AG04449 (cell line): ENCODE measurements at regions of chr10 and their contacts with region 1.

Region 1: GRCh38 chr10:77173615-77174461 is 463.8 kb downstream of the KCNMA1 start:
- DNase-seq: no peak
- H3K4me3 ChIP-seq: no peak overlapping the region
- CTCF ChIP-seq: peak; percentile 86

Region 2: DNA sequence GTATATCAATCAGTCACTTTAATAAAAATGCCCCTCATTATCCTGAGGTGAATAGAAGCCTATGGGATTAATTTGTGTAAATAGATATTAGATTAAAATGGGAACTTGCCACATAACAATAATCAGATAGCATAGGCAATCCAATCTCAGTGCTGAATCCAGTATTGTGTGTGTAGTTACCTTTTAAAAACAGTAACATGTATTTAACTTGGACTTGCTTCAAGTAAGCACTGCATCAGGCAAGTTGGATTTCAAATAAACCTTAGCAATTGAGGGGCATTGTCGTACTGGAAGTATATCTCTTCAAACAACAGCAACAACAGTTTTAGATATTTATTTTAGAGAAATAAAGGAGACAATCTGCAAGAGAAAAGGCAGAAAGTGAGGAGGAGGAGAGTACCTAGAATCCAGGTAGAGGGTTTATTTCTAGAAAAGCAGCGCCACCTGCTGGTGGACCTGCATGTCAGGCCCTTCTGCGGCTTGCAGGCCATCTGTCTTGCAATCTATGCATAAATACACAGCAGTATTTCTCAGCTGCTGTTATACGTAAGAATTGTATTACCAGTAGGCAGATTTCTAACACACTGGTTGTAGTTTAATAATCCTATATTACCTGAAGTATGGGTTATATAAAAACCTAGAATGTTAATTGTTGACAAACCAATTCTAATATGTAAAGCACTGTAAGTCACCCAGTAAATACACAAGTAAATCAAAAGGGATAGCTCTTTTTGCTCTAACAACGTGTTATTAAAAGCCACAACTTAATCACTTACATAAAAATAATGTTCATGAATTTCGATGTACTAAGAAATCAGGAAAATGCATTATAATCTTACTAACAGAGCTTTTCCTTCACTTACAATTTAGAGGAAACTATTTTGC is 189.0 kb before region 1 on chr10:
- CTCF ChIA-PET with region 1: no interaction called
- POLR2A ChIA-PET with region 1: no interaction called
- DNase-seq: peak; percentile 14
- H3K4me3 ChIP-seq: no peak overlapping the region
- CTCF ChIP-seq: peak; percentile 84

Region 3: GRCh38 chr10:77188521-77188920 is 14.7 kb after region 1 on chr10:
- CTCF ChIA-PET with region 1: interaction called, 11 read pairs
- POLR2A ChIA-PET with region 1: interaction called, 3 read pairs
- DNase-seq: no peak
- H3K4me3 ChIP-seq: no peak overlapping the region
- CTCF ChIP-seq: no peak

Region 4: DNA sequence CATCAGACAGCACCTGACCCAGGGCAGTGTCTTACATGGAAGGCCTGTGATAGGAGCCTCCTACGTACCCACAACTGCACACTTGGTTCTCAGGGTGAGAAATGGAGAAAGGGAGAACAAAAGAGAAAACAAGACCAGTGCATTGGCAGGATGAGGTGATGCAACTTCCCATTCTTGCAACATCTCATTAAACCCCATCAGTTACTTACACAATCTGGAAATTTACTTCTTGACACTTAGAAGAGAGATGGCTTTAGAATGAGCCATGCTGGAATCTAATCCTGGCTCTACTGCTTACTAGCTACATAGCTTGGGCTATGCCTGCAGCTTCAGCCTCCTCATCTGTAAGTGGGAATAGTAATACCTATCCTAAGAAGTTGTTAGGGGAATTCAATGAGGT is 72.1 kb after region 1 on chr10:
- CTCF ChIA-PET with region 1: interaction called, 45 read pairs
- POLR2A ChIA-PET with region 1: no interaction called
- DNase-seq: no peak
- H3K4me3 ChIP-seq: no peak overlapping the region
- CTCF ChIP-seq: no peak

Region 5: GRCh38 chr10:77320971-77321471 is 147.2 kb after region 1 on chr10:
- CTCF ChIA-PET with region 1: interaction called, 12 read pairs
- POLR2A ChIA-PET with region 1: no interaction called
- DNase-seq: peak; percentile 97
- H3K4me3 ChIP-seq: no peak overlapping the region
- CTCF ChIP-seq: no peak

Region 6: DNA sequence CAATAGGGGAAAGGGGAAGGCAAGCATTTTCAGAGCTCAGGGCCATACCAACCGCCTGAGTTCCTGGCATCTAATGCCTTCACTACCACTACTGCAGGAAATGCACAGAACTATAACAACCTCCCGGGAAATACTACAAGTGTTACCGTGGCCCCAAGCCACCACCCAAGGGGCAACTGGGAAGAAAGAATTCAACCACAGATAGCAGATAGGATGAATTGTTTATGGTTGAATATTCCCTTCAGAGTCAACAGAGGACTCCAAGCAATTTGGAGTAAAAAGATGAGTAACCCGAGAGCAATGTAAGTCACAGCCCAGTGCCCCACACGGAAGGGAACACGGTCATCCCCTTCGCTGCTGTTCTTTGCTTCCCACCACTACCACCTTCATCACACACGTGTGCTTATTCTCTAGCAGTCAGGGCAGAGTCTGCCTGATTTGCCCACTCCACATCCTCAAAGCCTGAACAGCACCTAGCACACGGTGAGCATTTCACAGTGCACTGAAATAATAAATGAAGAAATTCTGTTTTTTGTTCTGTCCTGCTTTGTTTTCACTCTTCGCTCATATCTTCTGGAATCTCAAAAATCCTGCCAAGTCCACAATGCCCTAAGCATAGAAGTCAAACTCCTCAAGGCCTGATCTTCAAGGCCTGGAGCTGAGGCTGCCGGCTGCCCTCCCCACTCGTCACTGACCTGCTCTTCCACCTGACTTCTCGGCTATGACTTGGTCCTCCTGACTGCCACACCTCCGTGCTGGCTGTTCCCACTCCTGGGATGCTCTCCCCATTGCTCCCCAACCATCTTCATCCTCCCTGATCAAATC is 242.7 kb after region 1 on chr10:
- CTCF ChIA-PET with region 1: interaction called, 48 read pairs
- POLR2A ChIA-PET with region 1: interaction called, 3 read pairs
- DNase-seq: peak; percentile 86
- H3K4me3 ChIP-seq: peak overlapping the region; percentile 3; the same call in 1 of the 2 replicates
- CTCF ChIP-seq: no peak

Region 7: GRCh38 chr10:77485847-77486246 is 312.0 kb after region 1 on chr10:
- CTCF ChIA-PET with region 1: interaction called, 12 read pairs
- POLR2A ChIA-PET with region 1: no interaction called
- DNase-seq: no peak
- H3K4me3 ChIP-seq: no peak overlapping the region
- CTCF ChIP-seq: no peak

Region 8: GRCh38 chr10:77710759-77711682 is 537.2 kb after region 1 on chr10:
- CTCF ChIA-PET with region 1: interaction called, 92 read pairs
- POLR2A ChIA-PET with region 1: no interaction called
- DNase-seq: no peak
- H3K4me3 ChIP-seq: peak overlapping the region; percentile 52
- CTCF ChIP-seq: peak; percentile 100